ENCODE measurements at regions of chr9 and their contacts with region 1.

Region 1: DNA sequence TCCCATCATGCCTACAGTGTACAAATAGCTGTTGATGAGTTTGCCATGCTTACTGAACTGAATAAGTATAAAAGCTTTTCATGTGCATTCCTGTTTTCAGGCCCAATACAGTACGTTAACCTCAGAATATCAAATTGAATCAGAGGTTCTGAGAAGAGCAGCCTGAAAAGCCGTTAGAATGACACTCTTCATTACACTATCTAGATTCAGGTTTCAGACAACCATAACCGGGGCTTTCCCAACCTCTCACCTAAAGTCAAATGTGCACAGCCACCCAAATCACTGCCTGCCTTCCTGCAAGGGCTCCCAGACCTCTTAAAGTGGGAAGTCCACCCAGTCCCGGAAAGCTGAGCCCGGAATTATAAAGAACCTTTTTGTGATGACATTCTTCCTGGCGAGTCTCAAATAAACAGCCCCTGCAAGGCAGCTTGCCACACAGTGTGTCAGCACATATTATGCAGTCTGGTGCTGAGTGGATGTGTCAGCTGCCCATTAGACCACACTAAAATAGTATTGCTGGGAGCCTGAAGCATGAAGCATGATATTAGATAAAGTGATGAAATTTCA is 245.8 kb downstream of the TLE4 start:
- DNase-seq: peak; percentile 24
- ATAC-seq: peak; percentile 72
- H3K4me3 Mint-ChIP-seq: peak overlapping the region; percentile 17
- H3K27ac Mint-ChIP-seq: peak overlapping the region; percentile 47
- H3K4me1 Mint-ChIP-seq: peaks cover 52% of the 10 kb centered on the region
- H3K27me3 Mint-ChIP-seq: peaks cover 2% of the 10 kb centered on the region
- CTCF ChIP-seq: no peak

Region 2: GRCh38 chr9:78756813-78757510 is 1060.6 kb before region 1 on chr9:
- CTCF ChIA-PET with region 1: no interaction called
- POLR2A ChIA-PET with region 1: no interaction called
- intact Hi-C with region 1: loop called (anchors 10 kb)
- DNase-seq: no peak
- ATAC-seq: peak; percentile 96
- H3K4me3 Mint-ChIP-seq: peak overlapping the region; percentile 59
- H3K27ac Mint-ChIP-seq: peak overlapping the region; percentile 24
- H3K4me1 Mint-ChIP-seq: peaks cover 23% of the 10 kb centered on the region
- H3K27me3 Mint-ChIP-seq: peaks cover 5% of the 10 kb centered on the region
- CTCF ChIP-seq: no peak

Region 3: GRCh38 chr9:79829566-79830302 is 12.2 kb after region 1 on chr9:
- CTCF ChIA-PET with region 1: no interaction called
- POLR2A ChIA-PET with region 1: interaction called, 4 read pairs
- intact Hi-C with region 1: loop called (anchors 1 kb)
- DNase-seq: no peak
- ATAC-seq: no peak
- H3K4me3 Mint-ChIP-seq: no peak overlapping the region
- H3K27ac Mint-ChIP-seq: no peak overlapping the region
- H3K4me1 Mint-ChIP-seq: peaks cover 6% of the 10 kb centered on the region
- H3K27me3 Mint-ChIP-seq: no peaks in the 10 kb centered on the region
- CTCF ChIP-seq: no peak

Region 4: DNA sequence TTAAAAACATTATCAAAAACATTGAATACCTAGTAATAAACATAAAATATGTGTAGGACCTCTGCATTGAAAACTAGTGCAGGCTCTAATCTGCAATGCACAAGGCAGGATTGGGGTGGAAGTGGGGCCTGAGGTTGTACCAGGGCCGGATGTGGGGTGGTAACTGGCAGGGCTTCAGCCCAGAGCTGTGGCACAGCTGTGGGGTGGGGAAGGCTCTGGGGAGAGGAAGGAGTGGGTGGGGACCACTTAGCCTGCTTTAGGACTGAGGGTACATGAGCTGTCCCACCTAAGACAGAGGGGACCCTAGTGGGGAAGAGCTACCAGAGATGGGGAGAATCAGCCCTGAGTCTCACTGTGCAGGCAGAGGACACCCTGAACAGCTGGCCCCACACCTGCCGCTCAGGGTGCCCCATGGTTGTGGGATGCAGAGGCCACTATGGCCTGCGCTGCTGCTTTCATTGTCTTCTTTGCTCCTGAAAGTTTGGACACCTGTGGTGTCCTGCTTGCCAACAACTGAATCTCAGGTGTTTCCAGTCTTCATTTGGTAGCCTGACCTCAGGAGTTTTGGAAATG is 65.6 kb after region 1 on chr9:
- CTCF ChIA-PET with region 1: no interaction called
- POLR2A ChIA-PET with region 1: interaction called, 6 read pairs
- intact Hi-C with region 1: loop called (anchors 1 kb)
- DNase-seq: peak; percentile 42
- ATAC-seq: peak; percentile 69
- H3K4me3 Mint-ChIP-seq: peak overlapping the region; percentile 72
- H3K27ac Mint-ChIP-seq: peak overlapping the region; percentile 69
- H3K4me1 Mint-ChIP-seq: peaks cover 75% of the 10 kb centered on the region
- H3K27me3 Mint-ChIP-seq: no peaks in the 10 kb centered on the region
- CTCF ChIP-seq: no peak

Region 5: GRCh38 chr9:80134487-80134886 is 317.0 kb after region 1 on chr9:
- CTCF ChIA-PET with region 1: no interaction called
- POLR2A ChIA-PET with region 1: interaction called, 5 read pairs
- intact Hi-C with region 1: loop called (anchors 5 kb)
- DNase-seq: no peak
- ATAC-seq: peak; percentile 98
- H3K4me3 Mint-ChIP-seq: peak overlapping the region; percentile 61
- H3K27ac Mint-ChIP-seq: peak overlapping the region; percentile 79
- H3K4me1 Mint-ChIP-seq: peaks cover 42% of the 10 kb centered on the region
- H3K27me3 Mint-ChIP-seq: no peaks in the 10 kb centered on the region
- CTCF ChIP-seq: no peak

Region 6: DNA sequence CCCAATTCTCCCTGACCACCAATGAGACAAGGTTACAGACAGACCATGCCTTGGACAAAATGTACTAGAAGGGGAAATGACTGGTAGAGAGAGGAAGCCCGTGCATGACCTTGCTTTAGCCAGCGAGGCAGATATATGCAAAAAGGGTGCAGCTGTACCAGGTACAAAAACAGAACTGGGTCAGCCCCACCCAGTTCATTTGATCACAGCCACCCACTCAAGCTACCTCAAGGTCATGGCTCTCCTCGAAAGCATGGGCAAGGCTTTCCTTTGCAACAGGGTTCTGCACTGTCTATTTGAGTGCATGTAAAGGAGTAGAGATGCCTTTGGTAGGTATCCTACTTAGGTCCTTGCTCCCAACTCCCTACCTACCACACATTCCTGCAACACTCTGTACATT is 1838.5 kb after region 1 on chr9:
- CTCF ChIA-PET with region 1: no interaction called
- POLR2A ChIA-PET with region 1: no interaction called
- intact Hi-C with region 1: loop called (anchors 5 kb)
- DNase-seq: peak; percentile 42
- ATAC-seq: peak; percentile 89
- H3K4me3 Mint-ChIP-seq: peak overlapping the region; percentile 78
- H3K27ac Mint-ChIP-seq: peak overlapping the region; percentile 97
- H3K4me1 Mint-ChIP-seq: peaks cover 84% of the 10 kb centered on the region
- H3K27me3 Mint-ChIP-seq: no peaks in the 10 kb centered on the region
- CTCF ChIP-seq: no peak